Left colon (tissue), 2 donors: ENCODE measurements at regions of chr1 and their contacts with region 1.

Region 1: DNA sequence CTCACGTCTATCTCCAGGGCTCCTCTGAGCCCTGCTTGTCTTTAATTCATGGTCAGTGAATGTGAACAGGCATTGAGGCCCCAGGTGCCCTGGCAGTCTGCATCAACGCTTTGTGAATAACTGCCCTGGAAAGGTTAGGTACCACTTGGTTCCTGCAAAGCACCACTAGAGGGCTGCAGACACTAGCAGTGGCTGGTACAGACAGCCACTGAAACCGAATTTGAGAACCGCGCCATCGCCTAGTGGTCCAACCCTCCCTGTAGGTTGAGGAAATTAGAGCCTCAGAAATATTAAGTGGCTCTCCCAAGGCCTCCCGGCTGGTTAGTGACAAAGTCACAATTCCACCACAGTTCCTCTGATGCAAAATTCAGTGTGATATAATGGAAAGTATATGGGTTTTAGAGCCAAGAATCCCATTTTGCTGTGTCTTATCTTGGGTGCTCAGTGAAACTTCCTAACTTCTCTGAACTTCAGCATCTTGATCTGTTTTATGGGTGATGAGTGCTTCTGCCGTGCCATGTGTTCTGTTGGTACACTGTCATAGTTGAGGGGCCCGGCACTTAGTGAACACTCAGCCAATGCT is 46.2 kb upstream of the BCL9 start:
- DNase-seq: peak; percentile 51 to 74
- ATAC-seq: peak; percentile 93

Region 2: DNA sequence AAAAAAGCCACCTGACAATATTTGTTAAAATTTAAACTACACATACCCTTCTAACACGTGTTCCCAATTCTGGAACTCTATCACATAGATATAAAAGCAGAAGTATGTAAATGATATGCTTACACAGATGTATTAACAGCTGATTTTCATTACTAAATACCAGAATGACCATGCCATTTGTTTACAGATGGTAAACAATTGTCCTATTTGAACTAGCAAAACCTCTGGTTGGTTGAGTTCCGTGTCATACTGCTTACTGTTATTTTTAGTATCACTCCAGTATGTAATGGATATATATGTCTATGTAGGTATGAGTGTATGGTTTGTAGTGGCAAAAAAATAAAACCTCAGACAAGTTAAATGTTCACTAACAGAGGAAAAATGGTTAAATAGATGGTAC is 181.8 kb before region 1 on chr1:
- intact Hi-C with region 1: no loop called
- DNase-seq: no peak
- ATAC-seq: no peak

Region 3: GRCh38 chr1:147452809-147453208 is 42.3 kb before region 1 on chr1:
- intact Hi-C with region 1: no loop called
- DNase-seq: no peak
- ATAC-seq: no peak

Region 4: DNA sequence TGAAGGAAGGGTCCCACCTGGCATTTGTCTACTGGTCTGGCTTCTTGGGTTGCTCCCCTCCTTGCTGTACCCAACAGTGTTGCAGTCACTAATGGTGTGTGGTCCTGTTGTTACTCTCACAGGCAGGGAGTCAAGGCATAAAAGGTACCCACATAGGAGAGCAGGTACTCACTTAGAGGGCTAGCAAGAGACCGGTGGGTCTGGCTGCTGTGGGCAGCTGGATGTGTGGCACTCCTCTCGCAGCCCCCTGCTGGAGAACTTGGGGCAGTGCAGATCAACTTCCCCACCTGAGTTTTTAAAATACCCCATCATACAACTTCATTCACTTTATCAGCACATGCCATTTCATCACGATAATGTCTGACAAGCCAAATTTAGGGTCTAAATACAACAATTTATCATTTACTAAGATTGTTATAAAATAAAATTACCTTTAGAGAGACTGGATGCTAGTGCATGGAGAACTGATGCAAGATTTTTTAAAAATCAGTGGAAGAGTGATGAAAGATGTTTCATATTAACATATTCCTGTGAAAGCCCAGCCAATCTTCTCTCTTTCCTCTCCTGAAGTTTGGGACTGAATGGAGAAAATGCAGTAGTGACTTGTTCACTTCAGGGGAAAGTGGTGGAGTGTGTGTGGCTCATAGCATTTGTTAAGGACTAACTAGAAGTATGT is 132.5 kb after region 1 on chr1:
- intact Hi-C with region 1: loop called in 1 of 2 experiments (anchors 5 kb)
- DNase-seq: peak in 1 of 2 donors; percentile 53
- ATAC-seq: peak; percentile 77

Region 5: DNA sequence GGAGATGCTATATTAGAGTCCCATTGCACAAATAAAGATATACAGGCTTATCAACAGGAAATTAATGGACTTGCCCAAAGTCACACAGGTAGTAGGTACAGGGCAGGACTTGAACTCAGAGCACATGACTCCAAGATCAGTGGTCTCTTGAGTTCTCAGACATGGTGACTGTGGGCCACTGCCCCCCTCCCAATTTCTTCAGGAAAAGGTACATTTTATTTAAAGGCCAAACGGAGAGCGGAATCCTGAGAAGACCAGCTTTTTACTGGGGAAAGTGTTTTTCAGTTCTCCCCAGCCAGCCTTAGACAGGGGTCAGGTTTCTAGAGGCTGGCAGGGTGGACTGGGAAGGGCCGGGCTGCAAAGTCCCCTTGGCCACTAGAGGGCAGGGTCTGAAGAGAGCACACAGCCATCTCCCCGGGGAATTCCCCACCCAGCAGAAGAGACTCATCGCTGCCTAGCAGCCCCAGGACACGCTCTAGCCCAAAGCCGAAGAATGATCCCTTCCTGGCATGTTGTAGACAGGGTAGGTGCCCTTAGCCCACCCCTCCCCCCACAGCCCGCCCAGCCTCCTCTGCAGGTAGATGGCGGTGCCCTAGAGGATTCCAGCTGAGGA is 145.6 kb after region 1 on chr1:
- intact Hi-C with region 1: loop called in 1 of 2 experiments (anchors 5 kb)
- DNase-seq: peak; percentile 66 to 80
- ATAC-seq: peak; percentile 97

Region 6: DNA sequence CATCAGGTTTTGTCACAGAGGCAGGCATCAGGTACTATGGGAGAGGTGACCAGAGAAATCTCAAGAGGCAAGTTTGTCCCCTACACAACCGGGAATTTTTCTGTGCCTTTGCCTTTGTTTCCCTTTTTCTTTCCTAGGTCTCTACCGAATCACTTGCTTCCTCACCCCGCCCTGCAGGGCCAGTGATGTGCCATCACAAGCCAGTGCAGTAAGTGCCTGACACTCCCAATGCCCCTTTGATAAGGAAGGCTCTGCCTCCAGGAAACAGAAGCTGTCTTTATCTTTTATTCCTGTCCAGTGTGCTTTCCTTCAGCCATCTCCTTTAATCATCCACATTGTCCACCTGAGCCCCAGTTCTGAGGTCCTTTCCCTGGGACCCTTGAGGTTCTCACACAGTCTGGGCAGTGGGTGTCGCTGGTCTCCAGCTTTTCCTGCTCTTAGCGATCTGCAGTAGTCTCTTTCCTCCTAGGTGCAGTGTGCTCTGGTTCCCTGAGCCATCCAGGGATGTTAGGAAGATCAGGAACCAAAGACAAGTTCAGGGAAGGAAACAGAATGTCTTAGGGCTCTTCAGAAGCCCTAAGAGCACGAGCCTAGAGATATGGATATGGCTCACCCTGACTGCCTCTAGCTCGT is 228.7 kb after region 1 on chr1:
- intact Hi-C with region 1: no loop called
- DNase-seq: peak in 1 of 2 donors; percentile 13
- ATAC-seq: peak; percentile 69

Region 7: GRCh38 chr1:147735423-147735822 is 240.3 kb after region 1 on chr1:
- intact Hi-C with region 1: no loop called
- DNase-seq: no peak
- ATAC-seq: no peak